Mucosa of descending colon (tissue), 3 donors: ENCODE measurements at regions of chr17 and their contacts with region 1.

Region 1: GRCh38 chr17:27760069-27760885 is 40.1 kb downstream of the NOS2 start:
- DNase-seq: peak in 2 of 3 donors; percentile 79 to 84
- ATAC-seq: peak; percentile 67
- H3K4me3 ChIP-seq: no peak overlapping the region
- H3K4me1 ChIP-seq: no peaks in the 10 kb centered on the region
- CTCF ChIP-seq: peak; percentile 83

Region 2: GRCh38 chr17:27654654-27655524 is 105.4 kb before region 1 on chr17:
- intact Hi-C with region 1: loop called (anchors 5 to 10 kb)
- DNase-seq: peak; percentile 80 to 85 (median 83)
- ATAC-seq: peak; percentile 83
- H3K4me3 ChIP-seq: no peak overlapping the region
- H3K4me1 ChIP-seq: no peaks in the 10 kb centered on the region
- CTCF ChIP-seq: peak; percentile 82

Region 3: GRCh38 chr17:27666831-27667560 is 93.3 kb before region 1 on chr17:
- intact Hi-C with region 1: loop called in 1 of 2 experiments (anchors 10 kb)
- DNase-seq: peak in 1 of 3 donors; percentile 7
- ATAC-seq: no peak
- H3K4me3 ChIP-seq: no peak overlapping the region
- H3K4me1 ChIP-seq: no peaks in the 10 kb centered on the region
- CTCF ChIP-seq: no peak

Region 4: DNA sequence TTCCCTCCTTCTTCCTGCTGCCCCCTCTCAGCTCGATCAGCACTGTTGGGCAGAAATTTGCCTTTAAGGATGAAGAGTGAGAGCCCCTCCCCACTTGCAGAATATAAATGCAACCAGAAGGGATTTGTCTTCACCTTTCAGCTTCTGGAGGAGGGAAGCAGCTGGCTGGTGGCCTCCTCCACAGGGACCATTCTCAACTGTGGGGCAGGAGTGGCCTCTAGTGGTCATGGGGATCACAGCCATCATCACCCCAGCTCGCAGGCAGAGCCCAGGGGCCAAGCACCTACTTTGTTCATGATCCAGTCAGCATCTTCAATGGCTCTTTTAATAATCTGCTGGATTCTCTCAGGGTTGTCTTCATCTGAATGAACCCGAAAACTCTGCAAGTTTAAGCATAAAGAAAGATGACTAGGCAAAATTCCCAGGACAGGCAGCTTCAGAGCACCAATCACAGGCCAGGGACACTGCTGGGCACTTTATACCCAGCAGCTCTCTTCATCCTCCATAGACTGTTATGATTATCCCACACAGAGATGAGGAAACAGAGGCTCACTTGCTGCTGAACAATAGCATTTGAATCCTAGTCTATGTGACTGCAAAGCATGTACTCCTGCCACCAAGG is 119.8 kb after region 1 on chr17:
- intact Hi-C with region 1: loop called in 1 of 2 experiments (anchors 10 kb)
- DNase-seq: peak; percentile 66 to 87 (median 86)
- ATAC-seq: peak; percentile 95
- H3K4me3 ChIP-seq: no peak overlapping the region
- H3K4me1 ChIP-seq: no peaks in the 10 kb centered on the region
- CTCF ChIP-seq: peak; percentile 63

Region 5: GRCh38 chr17:27980043-27980442 is 219.8 kb after region 1 on chr17:
- intact Hi-C with region 1: no loop called
- DNase-seq: no peak
- ATAC-seq: no peak
- H3K4me3 ChIP-seq: no peak overlapping the region
- H3K4me1 ChIP-seq: no peaks in the 10 kb centered on the region
- CTCF ChIP-seq: no peak